ENCODE measurements at regions of chr1 and their contacts with region 1.

Region 1: DNA sequence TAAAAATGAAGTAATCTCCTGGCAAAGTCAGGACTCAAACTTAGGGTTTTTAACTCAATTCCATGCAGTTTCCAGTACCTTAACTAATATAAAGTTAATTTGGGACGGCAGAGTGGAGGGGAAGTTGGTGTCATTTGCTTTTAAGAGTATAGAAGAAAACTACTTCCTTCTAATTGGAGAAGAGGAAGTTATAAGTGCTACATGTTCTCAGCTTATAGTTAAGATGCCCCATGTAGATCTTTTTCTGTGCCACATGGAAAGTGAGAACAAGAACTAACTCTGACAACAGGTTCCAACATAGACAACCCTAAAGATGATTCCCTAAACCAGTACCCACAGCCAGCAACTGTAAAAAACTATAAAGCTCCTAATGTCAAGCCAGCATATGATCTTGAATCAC is 11.5 kb downstream of the RRAGC start:
- DNase-seq: no peak
- ATAC-seq: no peak
- H3K4me3 ChIP-seq: no peak overlapping the region
- H3K4me3 Mint-ChIP-seq: no peak overlapping the region
- H3K27ac ChIP-seq: no peak overlapping the region
- H3K27ac Mint-ChIP-seq: no peak overlapping the region
- H3K4me1 ChIP-seq: no peaks in the 10 kb centered on the region
- H3K4me1 Mint-ChIP-seq: peaks cover 24% of the 10 kb centered on the region
- H3K27me3 ChIP-seq: no peaks in the 10 kb centered on the region
- H3K27me3 Mint-ChIP-seq: no peaks in the 10 kb centered on the region
- CTCF ChIP-seq: no peak

Region 2: GRCh38 chr1:37883671-37884070 is 964.4 kb before region 1 on chr1:
- CTCF ChIA-PET with region 1: no interaction called
- POLR2A ChIA-PET with region 1: no interaction called
- intact Hi-C with region 1: loop called in 1 of 2 experiments (anchors 10 kb)
- DNase-seq: no peak
- ATAC-seq: no peak
- H3K4me3 ChIP-seq: no peak overlapping the region
- H3K4me3 Mint-ChIP-seq: no peak overlapping the region
- H3K27ac ChIP-seq: no peak overlapping the region
- H3K27ac Mint-ChIP-seq: no peak overlapping the region
- H3K4me1 ChIP-seq: peaks cover 9% of the 10 kb centered on the region
- H3K4me1 Mint-ChIP-seq: no peaks in the 10 kb centered on the region
- H3K27me3 ChIP-seq: no peaks in the 10 kb centered on the region
- H3K27me3 Mint-ChIP-seq: no peaks in the 10 kb centered on the region
- CTCF ChIP-seq: no peak

Region 3: DNA sequence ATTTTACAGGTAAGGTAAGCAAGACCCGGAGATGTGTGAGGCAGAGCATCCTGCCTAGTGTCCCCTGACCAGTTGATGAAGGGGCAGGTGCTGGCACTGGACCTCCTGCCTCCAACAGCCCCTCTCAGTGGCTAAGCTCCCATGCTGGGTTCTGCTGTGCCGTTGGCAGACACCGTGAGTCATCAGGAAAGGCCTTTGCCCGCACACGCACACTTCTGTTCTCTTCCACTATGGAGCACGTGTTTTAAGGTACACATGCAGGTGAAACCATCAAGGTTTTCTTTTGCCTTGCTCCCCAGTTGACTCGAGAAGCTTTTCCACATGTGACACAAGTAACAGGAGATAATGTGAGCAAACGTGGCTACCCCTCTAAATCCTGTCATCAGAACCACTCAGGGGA is 196.4 kb before region 1 on chr1:
- CTCF ChIA-PET with region 1: no interaction called
- POLR2A ChIA-PET with region 1: no interaction called
- intact Hi-C with region 1: no loop called
- DNase-seq: no peak
- ATAC-seq: no peak
- H3K4me3 ChIP-seq: no peak overlapping the region
- H3K4me3 Mint-ChIP-seq: no peak overlapping the region
- H3K27ac ChIP-seq: no peak overlapping the region
- H3K27ac Mint-ChIP-seq: no peak overlapping the region
- H3K4me1 ChIP-seq: no peaks in the 10 kb centered on the region
- H3K4me1 Mint-ChIP-seq: no peaks in the 10 kb centered on the region
- H3K27me3 ChIP-seq: peaks cover 4 to 7% of the 10 kb centered on the region in 2 experiments
- H3K27me3 Mint-ChIP-seq: peaks cover 15% of the 10 kb centered on the region
- CTCF ChIP-seq: no peak